ENCODE measurements at regions of chr20 and their contacts with region 1.

Region 1: GRCh38 chr20:32031007-32031958 is 20.8 kb upstream of the HCK start:
- DNase-seq: peak; percentile 67
- ATAC-seq: peak; percentile 79
- H3K4me3 Mint-ChIP-seq: no peak overlapping the region
- H3K27ac Mint-ChIP-seq: no peak overlapping the region
- H3K4me1 Mint-ChIP-seq: no peaks in the 10 kb centered on the region
- H3K27me3 Mint-ChIP-seq: peaks cover 42% of the 10 kb centered on the region

Region 2: DNA sequence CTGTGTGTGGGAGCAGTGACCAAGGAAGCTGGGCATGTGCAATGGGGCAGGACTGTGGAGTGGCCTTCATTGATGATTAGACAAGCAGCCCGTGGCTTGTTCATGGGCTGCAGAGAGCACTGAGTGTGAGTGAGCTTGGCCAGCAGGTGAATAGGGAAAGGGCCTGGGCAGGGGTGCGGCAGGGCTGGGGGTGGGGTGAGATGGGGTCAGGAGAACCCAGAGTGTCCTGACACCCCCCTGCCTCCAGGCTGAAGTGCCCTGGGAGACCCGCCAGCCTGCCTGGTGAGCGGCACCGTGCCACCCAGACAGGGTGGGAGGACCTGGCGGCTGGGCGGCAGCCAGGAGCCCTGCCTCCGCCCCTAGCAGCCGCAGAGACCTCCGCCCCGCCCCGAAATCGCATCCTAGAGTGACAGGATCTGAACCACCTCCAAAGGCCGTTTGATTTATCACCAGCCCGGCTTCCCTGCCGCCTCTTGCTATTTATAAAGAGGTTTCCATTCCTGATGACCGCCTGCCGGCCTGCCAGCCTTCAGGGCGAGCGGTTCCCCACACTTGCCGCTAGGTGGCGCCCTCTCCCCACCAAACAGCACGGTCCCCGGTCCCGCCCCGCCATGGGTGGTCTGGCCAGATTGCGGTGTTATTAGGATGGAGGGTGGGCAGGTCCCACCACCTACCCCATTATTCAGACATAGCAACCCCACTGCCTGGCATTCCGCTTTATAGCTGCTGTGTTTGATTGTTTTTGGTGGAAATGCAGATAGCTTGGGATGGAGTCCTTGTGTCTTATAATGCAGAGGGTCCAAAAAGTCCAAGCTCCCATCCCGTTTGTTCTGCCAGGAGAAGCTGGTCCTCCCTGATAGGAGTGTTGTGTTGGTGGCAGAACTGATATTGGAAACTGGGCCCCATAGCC is 208.6 kb before region 1 on chr20:
- CTCF ChIA-PET with region 1: interaction called, 46 read pairs
- DNase-seq: peak; percentile 76
- ATAC-seq: peak; percentile 90
- H3K4me3 Mint-ChIP-seq: no peak overlapping the region
- H3K27ac Mint-ChIP-seq: no peak overlapping the region
- H3K4me1 Mint-ChIP-seq: peaks cover 7% of the 10 kb centered on the region
- H3K27me3 Mint-ChIP-seq: no peaks in the 10 kb centered on the region

Region 3: DNA sequence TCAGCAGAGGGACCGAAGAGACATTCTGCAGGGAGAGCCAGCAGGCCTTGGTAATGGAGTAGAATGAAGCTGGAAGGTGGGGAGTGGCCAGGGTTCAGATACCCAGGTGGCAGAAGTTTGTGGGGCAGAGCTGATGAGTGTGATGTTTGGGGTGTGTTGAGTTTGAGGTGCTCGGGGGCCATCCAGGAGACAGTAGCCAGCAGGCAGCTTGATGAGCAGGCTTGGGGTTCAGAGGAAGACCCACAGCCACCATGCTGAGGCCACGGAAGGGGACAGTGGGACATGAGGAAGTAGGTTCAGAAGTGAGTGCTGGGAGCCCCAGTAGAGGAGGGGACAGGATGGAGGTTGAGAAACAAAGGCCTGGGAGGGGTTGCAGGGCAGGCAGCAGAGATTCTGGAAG is 174.8 kb before region 1 on chr20:
- CTCF ChIA-PET with region 1: interaction called, 33 read pairs
- DNase-seq: no peak
- ATAC-seq: no peak
- H3K4me3 Mint-ChIP-seq: no peak overlapping the region
- H3K27ac Mint-ChIP-seq: no peak overlapping the region
- H3K4me1 Mint-ChIP-seq: peaks cover 6% of the 10 kb centered on the region
- H3K27me3 Mint-ChIP-seq: peaks cover 26% of the 10 kb centered on the region

Region 4: GRCh38 chr20:31951530-31952453 is 79.5 kb before region 1 on chr20 and contains the start of gene PDRG1:
- CTCF ChIA-PET with region 1: interaction called, 10 read pairs
- DNase-seq: peak; percentile 98
- ATAC-seq: peak; percentile 98
- H3K4me3 Mint-ChIP-seq: peak within 1 kb of the TSS; percentile 90
- H3K27ac Mint-ChIP-seq: peak within 1 kb of the TSS; percentile 93
- H3K4me1 Mint-ChIP-seq: peaks cover 25% of the 10 kb centered on the region
- H3K27me3 Mint-ChIP-seq: peaks cover 13% of the 10 kb centered on the region
- total RNA-seq, gene PDRG1: 14.9 to 15.6 TPM

Region 5: GRCh38 chr20:32018269-32019074 is 12.8 kb before region 1 on chr20:
- CTCF ChIA-PET with region 1: interaction called, 25 read pairs
- DNase-seq: peak; percentile 55
- ATAC-seq: peak; percentile 67
- H3K4me3 Mint-ChIP-seq: peak overlapping the region; percentile 63
- H3K27ac Mint-ChIP-seq: no peak overlapping the region
- H3K4me1 Mint-ChIP-seq: peaks cover 13% of the 10 kb centered on the region
- H3K27me3 Mint-ChIP-seq: peaks cover 80% of the 10 kb centered on the region

Region 6: GRCh38 chr20:32091888-32092346 is 60.6 kb after region 1 on chr20:
- CTCF ChIA-PET with region 1: interaction called, 21 read pairs
- DNase-seq: peak; percentile 85
- ATAC-seq: peak; percentile 85
- H3K4me3 Mint-ChIP-seq: no peak overlapping the region
- H3K27ac Mint-ChIP-seq: no peak overlapping the region
- H3K4me1 Mint-ChIP-seq: no peaks in the 10 kb centered on the region
- H3K27me3 Mint-ChIP-seq: peaks cover 18% of the 10 kb centered on the region

Measured in activated CD8-positive, alpha-beta memory T cell treated with anti-CD3 and anti-CD28 coated beads, Interleukin-2, amount 10 ng/mL, durations not matched to agents 7 days and 5 days (primary cell).